ENCODE measurements at regions of chrX and their contacts with region 1.

Region 1: GRCh38 chrX:47193475-47194193 is at the start of gene UBA1:
- DNase-seq: peak; percentile 95
- ATAC-seq: peak; percentile 82
- H3K4me3 ChIP-seq: peak within 1 kb of the TSS; percentile 74
- H3K27ac ChIP-seq: peak within 1 kb of the TSS; percentile 87
- H3K4me1 ChIP-seq: peaks cover 24% of the 10 kb centered on the region
- H3K27me3 ChIP-seq: no peaks in the 10 kb centered on the region; the same call in 1 of the 2 replicates
- CTCF ChIP-seq: peak; percentile 92
- POLR2A ChIP-seq: peak; percentile 94
- RAD21 ChIP-seq: peak; percentile 92
- total RNA-seq, gene UBA1: 256 and 299 TPM in 2 replicates

Region 2: DNA sequence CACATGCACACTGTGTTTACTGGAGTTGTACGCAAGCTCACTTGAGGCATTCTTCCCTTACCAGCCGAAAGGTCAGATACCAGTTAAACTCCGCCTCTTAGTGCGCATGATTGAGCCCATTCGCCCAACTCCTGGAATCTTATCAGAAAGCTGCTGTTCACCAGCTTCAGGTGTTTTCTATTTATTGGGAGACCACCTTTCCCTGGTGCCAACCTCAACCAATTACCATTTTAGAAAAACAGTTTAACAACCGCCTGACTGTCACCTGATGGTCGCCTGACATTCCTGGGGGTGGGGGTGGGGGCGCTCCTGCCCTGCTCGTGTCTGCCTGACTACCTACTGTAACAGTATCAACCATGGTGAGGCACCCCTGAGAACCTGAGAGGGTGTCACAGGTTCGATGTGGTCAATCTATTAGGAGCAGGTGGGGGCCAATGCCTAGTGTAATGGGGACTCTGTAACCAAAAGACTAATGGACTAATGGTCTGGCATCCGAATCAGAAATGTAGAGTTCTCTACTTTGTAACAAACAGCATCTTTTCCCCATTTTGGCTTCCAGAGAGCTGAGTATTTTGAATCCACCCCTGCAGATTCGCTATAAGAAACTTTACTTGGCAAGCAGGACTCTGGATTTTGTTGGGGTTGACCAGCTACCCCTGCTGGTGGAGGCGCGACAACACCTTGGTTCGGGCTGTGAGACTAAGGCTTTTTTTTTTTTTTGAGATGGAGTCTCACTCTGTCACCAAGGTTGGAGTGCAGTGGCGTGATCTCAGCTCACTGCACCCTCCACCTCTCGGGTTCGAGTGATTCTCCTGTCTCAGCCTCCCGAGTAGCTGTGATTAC is 118.5 kb after region 1 on chrX:
- CTCF ChIA-PET with region 1: no interaction called
- POLR2A ChIA-PET with region 1: no interaction called
- dilution Hi-C with region 1: no loop called
- in situ Hi-C with region 1: no loop called
- intact Hi-C with region 1: loop called (anchors 2 kb)
- DNase-seq: peak; percentile 63
- ATAC-seq: peak; percentile 78
- H3K4me3 ChIP-seq: no peak overlapping the region
- H3K27ac ChIP-seq: no peak overlapping the region
- H3K4me1 ChIP-seq: no peaks in the 10 kb centered on the region
- H3K27me3 ChIP-seq: peaks cover 5% of the 10 kb centered on the region; the same call in 1 of the 2 replicates
- CTCF ChIP-seq: peak; percentile 57
- POLR2A ChIP-seq: no peak
- RAD21 ChIP-seq: peak; percentile 55

Region 3: GRCh38 chrX:47482512-47483309 is 289.1 kb after region 1 on chrX and contains the start of gene ZNF41:
- CTCF ChIA-PET with region 1: no interaction called
- POLR2A ChIA-PET with region 1: no interaction called
- dilution Hi-C with region 1: no loop called
- in situ Hi-C with region 1: no loop called
- intact Hi-C with region 1: loop called (anchors 5 kb)
- DNase-seq: peak; percentile 78
- ATAC-seq: peak; percentile 90
- H3K4me3 ChIP-seq: peak within 1 kb of the TSS; percentile 80
- H3K27ac ChIP-seq: peak within 1 kb of the TSS; percentile 93
- H3K4me1 ChIP-seq: peaks cover 2% of the 10 kb centered on the region
- H3K27me3 ChIP-seq: no peaks in the 10 kb centered on the region
- CTCF ChIP-seq: no peak
- POLR2A ChIP-seq: no peak
- RAD21 ChIP-seq: no peak
- total RNA-seq, gene ZNF41: 7.8 and 8.1 TPM in 2 replicates

Region 4: DNA sequence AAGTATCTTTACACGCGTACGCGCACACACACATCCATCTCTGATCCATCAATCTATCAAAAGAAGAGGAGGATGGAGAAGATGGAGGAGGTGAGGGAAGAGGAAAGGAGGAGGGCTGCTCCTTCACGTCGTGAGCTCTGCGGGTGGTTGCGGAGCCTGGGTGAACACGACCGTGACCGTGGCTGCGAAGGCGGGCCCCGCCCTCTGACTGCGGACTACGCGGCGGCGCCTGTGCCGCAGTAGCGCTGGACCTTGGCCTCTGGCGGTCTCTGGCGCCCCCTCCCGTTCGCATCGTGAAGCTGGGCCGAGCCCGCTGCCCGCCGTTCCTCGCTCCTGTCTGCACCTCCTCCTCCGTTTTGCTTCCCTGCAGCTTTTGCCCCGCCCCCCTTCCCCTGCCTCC is 329.7 kb after region 1 on chrX:
- CTCF ChIA-PET with region 1: no interaction called
- POLR2A ChIA-PET with region 1: no interaction called
- dilution Hi-C with region 1: no loop called
- in situ Hi-C with region 1: loop called (anchors 10 kb)
- intact Hi-C with region 1: loop called (anchors 1 kb)
- DNase-seq: peak; percentile 55
- ATAC-seq: peak; percentile 98
- H3K4me3 ChIP-seq: peak overlapping the region; percentile 45
- H3K27ac ChIP-seq: peak overlapping the region; percentile 38
- H3K4me1 ChIP-seq: peaks cover 2% of the 10 kb centered on the region; the same call in 1 of the 2 replicates
- H3K27me3 ChIP-seq: no peaks in the 10 kb centered on the region
- CTCF ChIP-seq: peak; percentile 83
- POLR2A ChIP-seq: no peak
- RAD21 ChIP-seq: peak; percentile 87